T-cell (primary cell): ENCODE measurements at regions of chr7 and their contacts with region 1.

Region 1: GRCh38 chr7:98472521-98472954 is 71.6 kb upstream of the BAIAP2L1 start:
- DNase-seq: no peak
- ATAC-seq: no peak
- H3K4me3 ChIP-seq: no peak overlapping the region
- H3K4me3 Mint-ChIP-seq: no peak overlapping the region
- H3K27ac ChIP-seq: no peak overlapping the region
- H3K27ac Mint-ChIP-seq: no peak overlapping the region
- H3K4me1 ChIP-seq: peaks cover 0 to 9% of the 10 kb centered on the region in 2 experiments
- H3K4me1 Mint-ChIP-seq: peaks cover 5 to 9% (median 5%) of the 10 kb centered on the region in 3 donors
- H3K27me3 ChIP-seq: peaks cover 0 to 40% of the 10 kb centered on the region in 2 experiments
- H3K27me3 Mint-ChIP-seq: peaks cover 36 to 42% of the 10 kb centered on the region in 2 donors

Region 2: GRCh38 chr7:98266840-98267239 is 205.7 kb before region 1 on chr7:
- CTCF ChIA-PET with region 1: no interaction called
- POLR2A ChIA-PET with region 1: no interaction called
- DNase-seq: no peak
- ATAC-seq: peak in 1 of 4 experiments; percentile 46
- H3K4me3 ChIP-seq: no peak overlapping the region
- H3K4me3 Mint-ChIP-seq: no peak overlapping the region
- H3K27ac ChIP-seq: no peak overlapping the region
- H3K27ac Mint-ChIP-seq: no peak overlapping the region
- H3K4me1 ChIP-seq: no peaks in the 10 kb centered on the region
- H3K4me1 Mint-ChIP-seq: peaks cover 0 to 8% (median 3%) of the 10 kb centered on the region in 3 donors
- H3K27me3 ChIP-seq: no peaks in the 10 kb centered on the region
- H3K27me3 Mint-ChIP-seq: no peaks in the 10 kb centered on the region

Region 3: DNA sequence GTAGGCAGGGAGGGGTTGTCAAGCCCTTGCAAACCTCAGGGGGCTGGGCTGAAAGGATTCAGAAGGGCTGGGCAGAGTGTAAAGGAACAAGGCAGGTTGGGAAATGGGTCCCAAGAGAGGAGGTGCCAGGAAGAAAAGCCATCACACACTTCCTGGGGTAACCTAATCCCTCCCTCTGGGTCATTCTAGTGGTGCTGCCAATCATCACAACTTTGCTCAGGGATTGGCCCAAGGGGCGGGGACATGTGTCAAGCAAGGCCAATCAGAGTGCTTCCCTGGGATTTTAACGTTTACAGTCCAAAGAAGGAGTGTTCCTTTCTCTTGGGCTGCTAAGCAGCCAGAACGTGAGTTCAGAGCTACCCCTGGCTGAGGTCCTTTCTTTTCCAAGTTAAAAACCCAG is 87.4 kb after region 1 on chr7:
- CTCF ChIA-PET with region 1: no interaction called
- POLR2A ChIA-PET with region 1: no interaction called
- DNase-seq: no peak
- ATAC-seq: no peak
- H3K4me3 ChIP-seq: no peak overlapping the region
- H3K4me3 Mint-ChIP-seq: no peak overlapping the region
- H3K27ac ChIP-seq: no peak overlapping the region
- H3K27ac Mint-ChIP-seq: no peak overlapping the region
- H3K4me1 ChIP-seq: no peaks in the 10 kb centered on the region
- H3K4me1 Mint-ChIP-seq: no peaks in the 10 kb centered on the region
- H3K27me3 ChIP-seq: peaks cover 0 to 26% of the 10 kb centered on the region in 2 experiments
- H3K27me3 Mint-ChIP-seq: peaks cover 7 to 12% of the 10 kb centered on the region in 2 donors

Region 4: DNA sequence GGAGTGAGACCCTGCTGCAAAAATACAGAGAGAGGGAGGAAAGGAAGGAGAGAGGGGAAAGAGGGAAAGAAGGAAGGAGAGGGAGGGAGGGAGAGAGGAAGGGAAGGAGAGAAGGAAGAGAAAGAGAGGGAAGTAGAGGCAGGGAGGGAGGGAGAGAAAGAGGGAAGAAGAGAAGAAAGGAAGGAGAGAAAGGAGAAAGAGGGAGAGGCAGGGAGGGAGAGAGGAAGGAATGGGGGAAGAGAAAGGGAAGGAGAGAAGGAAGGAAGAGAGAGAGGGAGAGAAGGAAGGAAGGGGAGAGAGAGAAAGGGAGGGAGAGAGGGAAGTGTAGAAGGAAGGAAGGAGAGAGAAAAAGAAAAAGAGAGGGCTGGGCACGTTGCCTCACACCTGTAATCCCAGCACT is 275.6 kb after region 1 on chr7:
- CTCF ChIA-PET with region 1: interaction called in 1 of 2 experiments, 13 read pairs
- POLR2A ChIA-PET with region 1: no interaction called
- DNase-seq: no peak
- ATAC-seq: no peak
- H3K4me3 ChIP-seq: no peak overlapping the region
- H3K4me3 Mint-ChIP-seq: no peak overlapping the region
- H3K27ac ChIP-seq: no peak overlapping the region
- H3K27ac Mint-ChIP-seq: no peak overlapping the region
- H3K4me1 ChIP-seq: no peaks in the 10 kb centered on the region
- H3K4me1 Mint-ChIP-seq: no peaks in the 10 kb centered on the region
- H3K27me3 ChIP-seq: peaks cover 0 to 14% of the 10 kb centered on the region in 2 experiments
- H3K27me3 Mint-ChIP-seq: peaks cover 13 to 16% of the 10 kb centered on the region in 2 donors